ENCODE measurements at regions of chr19 and their contacts with region 1.

Region 1: DNA sequence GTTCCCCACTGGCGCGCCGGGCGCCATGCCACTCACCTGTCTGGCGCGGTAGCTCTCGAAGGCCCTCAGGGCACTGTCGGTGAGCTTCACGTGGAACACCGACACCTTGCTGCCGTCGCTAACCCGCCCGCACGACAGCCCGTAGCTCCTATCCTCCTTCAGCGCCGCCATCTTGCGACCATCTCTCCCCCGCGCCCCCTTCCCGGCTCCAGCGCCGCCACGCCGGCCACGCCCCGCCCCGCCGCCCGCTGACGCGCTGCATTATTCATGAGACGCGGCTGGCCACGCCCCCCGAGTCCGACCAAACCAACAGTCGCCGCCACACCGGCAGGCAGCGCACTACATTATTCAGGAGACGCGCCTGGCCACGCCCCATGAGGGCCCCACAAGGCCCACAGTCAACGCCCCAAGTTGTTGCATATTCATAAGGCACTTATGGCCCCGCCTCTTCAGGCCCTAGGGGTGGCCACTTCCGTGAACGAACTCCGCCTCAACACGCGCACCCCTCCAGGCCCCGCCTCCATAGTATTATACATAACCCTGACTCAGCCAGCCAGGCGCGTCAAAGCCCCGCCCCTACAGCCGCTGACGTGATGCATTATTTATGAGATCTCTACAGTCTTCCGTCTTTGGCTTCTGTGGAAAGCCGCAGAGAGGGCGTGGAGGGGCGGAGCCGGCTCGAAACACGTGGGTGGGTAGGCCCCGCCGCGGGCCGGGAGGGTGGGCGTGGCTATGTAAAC is at the start of gene ELL:
- DNase-seq: peak; percentile 99 to 100 (median 100)
- ATAC-seq: peak; percentile 92
- H3K4me3 ChIP-seq: peak within 1 kb of the TSS; percentile 89
- H3K4me3 Mint-ChIP-seq: peak within 1 kb of the TSS; percentile 87 to 99 (median 94)
- H3K27ac ChIP-seq: peak within 1 kb of the TSS; percentile 94
- H3K27ac Mint-ChIP-seq: peak within 1 kb of the TSS; percentile 89 to 98 (median 95)
- H3K4me1 ChIP-seq: peaks cover 5 to 10% of the 10 kb centered on the region in 2 donors
- H3K4me1 Mint-ChIP-seq: peaks cover 0 to 24% (median 17%) of the 10 kb centered on the region in 7 donors
- H3K27me3 ChIP-seq: no peaks in the 10 kb centered on the region
- H3K27me3 Mint-ChIP-seq: no peaks in the 10 kb centered on the region
- total RNA-seq, gene ELL: 18.9 to 70.4 (median 25.0) TPM

Region 2: DNA sequence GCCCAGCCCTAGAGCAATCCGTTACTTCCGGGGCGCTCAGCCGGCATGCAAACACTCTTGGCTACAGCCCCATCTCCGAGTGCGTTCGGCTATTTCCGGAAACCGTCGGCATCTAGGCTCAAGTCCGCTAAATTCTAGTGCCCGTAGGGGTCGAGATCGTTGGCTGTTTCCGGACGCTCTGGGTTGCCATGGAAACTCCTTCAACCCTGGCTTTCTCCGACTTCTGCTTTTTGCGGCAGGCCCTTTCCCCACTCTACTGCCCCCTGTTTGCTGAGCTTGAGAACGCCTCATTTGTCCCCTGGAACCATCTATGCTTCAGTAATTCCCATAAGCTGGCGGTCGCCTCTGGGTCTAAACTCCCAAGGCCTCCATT is 369.6 kb before region 1 on chr19:
- CTCF ChIA-PET with region 1: no interaction called
- POLR2A ChIA-PET with region 1: no interaction called
- intact Hi-C with region 1: loop called in 1 of 2 experiments (anchors 1 kb)
- DNase-seq: peak; percentile 92 to 99 (median 97)
- ATAC-seq: peak; percentile 76
- H3K4me3 ChIP-seq: peak overlapping the region; percentile 82
- H3K4me3 Mint-ChIP-seq: peak overlapping the region; percentile 81 to 95 (median 88)
- H3K27ac ChIP-seq: peak overlapping the region; percentile 88
- H3K27ac Mint-ChIP-seq: peak overlapping the region; percentile 89 to 97 (median 95)
- H3K4me1 ChIP-seq: peaks cover 16 to 20% of the 10 kb centered on the region in 2 donors
- H3K4me1 Mint-ChIP-seq: peaks cover 9 to 32% (median 24%) of the 10 kb centered on the region in 7 donors
- H3K27me3 ChIP-seq: no peaks in the 10 kb centered on the region
- H3K27me3 Mint-ChIP-seq: no peaks in the 10 kb centered on the region

Region 3: GRCh38 chr19:18557474-18558201 is 35.6 kb after region 1 on chr19 and contains the start of gene KXD1:
- CTCF ChIA-PET with region 1: interaction called, 8 read pairs
- POLR2A ChIA-PET with region 1: interaction called, 24 read pairs
- intact Hi-C with region 1: loop called (anchors 1 kb)
- DNase-seq: peak; percentile 89 to 99 (median 97)
- ATAC-seq: peak; percentile 100
- H3K4me3 ChIP-seq: peak within 1 kb of the TSS; percentile 84
- H3K4me3 Mint-ChIP-seq: peak within 1 kb of the TSS; percentile 83 to 93 (median 91)
- H3K27ac ChIP-seq: peak within 1 kb of the TSS; percentile 95
- H3K27ac Mint-ChIP-seq: peak within 1 kb of the TSS; percentile 87 to 97 (median 96)
- H3K4me1 ChIP-seq: peaks cover 13 to 15% of the 10 kb centered on the region in 2 donors
- H3K4me1 Mint-ChIP-seq: peaks cover 6 to 25% (median 23%) of the 10 kb centered on the region in 7 donors
- H3K27me3 ChIP-seq: no peaks in the 10 kb centered on the region
- H3K27me3 Mint-ChIP-seq: no peaks in the 10 kb centered on the region
- total RNA-seq, gene KXD1: 74.7 to 108 (median 99.9) TPM

Region 4: DNA sequence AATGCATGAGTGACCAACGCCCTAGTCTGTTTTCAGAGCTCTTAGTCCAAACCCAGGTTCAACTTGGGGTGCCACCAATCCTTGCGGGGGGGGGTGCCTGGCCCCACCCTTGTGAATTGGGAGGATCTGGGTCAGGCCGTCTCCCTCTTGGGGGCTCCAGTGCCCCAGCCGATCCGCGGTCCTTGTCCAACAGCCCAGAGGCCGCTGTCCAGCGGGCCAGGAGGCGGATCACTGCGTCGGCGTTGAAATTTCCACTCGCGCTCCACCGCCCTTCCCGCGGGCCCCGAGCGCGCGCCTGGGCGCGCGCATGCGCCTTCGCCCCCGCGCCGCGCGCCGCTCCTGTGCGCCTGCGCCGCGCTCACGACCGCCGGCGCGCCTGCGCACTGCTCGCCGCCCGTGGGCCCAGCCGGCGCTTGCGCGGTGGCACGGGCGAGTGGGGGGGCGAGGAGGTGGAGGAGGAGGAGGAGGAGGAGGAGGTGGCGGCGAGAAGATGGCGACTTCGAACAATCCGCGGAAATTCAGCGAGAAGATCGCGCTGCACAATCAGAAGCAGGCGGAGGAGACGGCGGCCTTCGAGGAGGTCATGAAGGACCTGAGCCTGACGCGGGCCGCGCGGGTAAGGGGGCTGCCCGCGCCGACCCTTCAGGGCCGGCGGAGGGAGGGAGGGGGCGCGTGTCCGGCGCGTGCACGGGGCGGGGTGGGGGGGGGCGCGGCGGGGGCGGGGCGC is 161.3 kb after region 1 on chr19 and contains the start of gene CRTC1:
- CTCF ChIA-PET with region 1: interaction called, 5 read pairs
- POLR2A ChIA-PET with region 1: no interaction called
- intact Hi-C with region 1: loop called (anchors 1 to 2 kb)
- DNase-seq: peak; percentile 91 to 98 (median 96)
- ATAC-seq: peak; percentile 94
- H3K4me3 ChIP-seq: peak within 1 kb of the TSS; percentile 92
- H3K4me3 Mint-ChIP-seq: peak within 1 kb of the TSS; percentile 80 to 93 (median 87)
- H3K27ac ChIP-seq: peak within 1 kb of the TSS; percentile 78
- H3K27ac Mint-ChIP-seq: peak within 1 kb of the TSS; percentile 31 to 94 (median 90)
- H3K4me1 ChIP-seq: peaks cover 12 to 16% of the 10 kb centered on the region in 2 donors
- H3K4me1 Mint-ChIP-seq: peaks cover 6 to 45% (median 27%) of the 10 kb centered on the region in 7 donors
- H3K27me3 ChIP-seq: no peaks in the 10 kb centered on the region
- H3K27me3 Mint-ChIP-seq: peaks cover 0 to 3% (median 0%) of the 10 kb centered on the region in 5 donors
- total RNA-seq, gene CRTC1: 8.4 to 23.4 (median 22.3) TPM

Region 5: GRCh38 chr19:18846862-18847548 is 324.9 kb after region 1 on chr19:
- CTCF ChIA-PET with region 1: interaction called, 19 read pairs
- POLR2A ChIA-PET with region 1: interaction called, 3 read pairs
- intact Hi-C with region 1: loop called in 1 of 2 experiments (anchors 1 kb)
- DNase-seq: peak; percentile 45 to 70 (median 57)
- ATAC-seq: peak; percentile 83
- H3K4me3 ChIP-seq: no peak overlapping the region
- H3K4me3 Mint-ChIP-seq: peak overlapping the region in 8 of 10 donors; percentile 27 to 71 (median 56)
- H3K27ac ChIP-seq: no peak overlapping the region
- H3K27ac Mint-ChIP-seq: peak overlapping the region in 8 of 9 donors; percentile 23 to 83 (median 69)
- H3K4me1 ChIP-seq: peaks cover 32 to 34% of the 10 kb centered on the region in 2 donors
- H3K4me1 Mint-ChIP-seq: peaks cover 49 to 65% (median 54%) of the 10 kb centered on the region in 7 donors
- H3K27me3 ChIP-seq: no peaks in the 10 kb centered on the region
- H3K27me3 Mint-ChIP-seq: no peaks in the 10 kb centered on the region

Region 6: DNA sequence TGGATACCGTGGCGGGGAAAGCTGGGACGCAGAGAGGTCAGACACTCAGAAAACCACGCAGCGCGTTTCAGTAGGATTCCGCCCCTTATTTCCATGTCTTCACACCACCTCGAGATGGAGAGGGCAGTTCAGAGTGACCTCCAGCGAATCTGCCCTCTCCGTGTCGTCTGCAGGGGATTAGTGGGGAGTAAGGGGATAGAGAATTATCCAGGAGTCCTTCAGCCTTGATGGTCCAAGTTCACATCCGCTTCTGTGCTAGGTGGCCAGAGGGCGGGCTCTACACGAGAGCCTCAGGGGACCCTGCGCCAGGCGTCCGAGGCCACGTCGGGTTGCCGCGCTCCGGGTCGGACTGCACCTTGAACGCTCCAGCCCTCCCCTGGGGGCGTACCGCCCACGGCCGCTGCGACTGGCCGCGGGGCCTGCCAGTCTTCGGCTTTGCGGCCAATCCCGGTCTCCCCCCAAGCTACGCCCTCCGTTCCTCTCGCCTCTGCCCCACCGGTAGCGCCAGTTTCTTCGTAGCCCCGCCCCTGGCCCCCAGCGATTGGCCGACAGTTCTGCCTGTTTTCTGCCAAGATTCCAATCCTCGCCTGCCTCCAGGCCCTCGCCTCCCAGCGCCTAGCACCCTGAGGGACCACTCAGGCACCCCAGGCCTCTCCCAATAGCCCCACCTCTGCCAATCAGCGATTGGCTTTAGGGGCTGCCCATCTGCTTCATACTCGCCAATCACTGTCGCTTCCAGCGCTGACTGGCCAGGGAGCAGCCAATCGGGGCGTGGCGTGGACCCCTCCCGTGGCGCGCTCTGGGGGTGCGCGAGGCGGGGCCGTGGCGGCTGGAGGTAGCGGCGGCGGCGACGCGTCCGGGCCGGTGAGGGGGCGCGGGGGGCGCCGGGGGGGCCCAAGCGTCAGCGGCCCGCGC is 541.4 kb after region 1 on chr19 and contains the start of gene SLC25A42:
- CTCF ChIA-PET with region 1: no interaction called
- POLR2A ChIA-PET with region 1: no interaction called
- intact Hi-C with region 1: loop called in 1 of 2 experiments (anchors 1 kb)
- DNase-seq: peak; percentile 93 to 100 (median 99)
- ATAC-seq: peak; percentile 95
- H3K4me3 ChIP-seq: peak within 1 kb of the TSS; percentile 82
- H3K4me3 Mint-ChIP-seq: peak within 1 kb of the TSS; percentile 83 to 99 (median 92)
- H3K27ac ChIP-seq: peak within 1 kb of the TSS; percentile 83
- H3K27ac Mint-ChIP-seq: peak within 1 kb of the TSS; percentile 75 to 98 (median 83)
- H3K4me1 ChIP-seq: peaks cover 11 to 15% of the 10 kb centered on the region in 2 donors
- H3K4me1 Mint-ChIP-seq: peaks cover 5 to 41% (median 35%) of the 10 kb centered on the region in 7 donors
- H3K27me3 ChIP-seq: no peaks in the 10 kb centered on the region
- H3K27me3 Mint-ChIP-seq: no peaks in the 10 kb centered on the region
- total RNA-seq, gene SLC25A42: 19.0 to 36.1 (median 21.6) TPM

Region 7: DNA sequence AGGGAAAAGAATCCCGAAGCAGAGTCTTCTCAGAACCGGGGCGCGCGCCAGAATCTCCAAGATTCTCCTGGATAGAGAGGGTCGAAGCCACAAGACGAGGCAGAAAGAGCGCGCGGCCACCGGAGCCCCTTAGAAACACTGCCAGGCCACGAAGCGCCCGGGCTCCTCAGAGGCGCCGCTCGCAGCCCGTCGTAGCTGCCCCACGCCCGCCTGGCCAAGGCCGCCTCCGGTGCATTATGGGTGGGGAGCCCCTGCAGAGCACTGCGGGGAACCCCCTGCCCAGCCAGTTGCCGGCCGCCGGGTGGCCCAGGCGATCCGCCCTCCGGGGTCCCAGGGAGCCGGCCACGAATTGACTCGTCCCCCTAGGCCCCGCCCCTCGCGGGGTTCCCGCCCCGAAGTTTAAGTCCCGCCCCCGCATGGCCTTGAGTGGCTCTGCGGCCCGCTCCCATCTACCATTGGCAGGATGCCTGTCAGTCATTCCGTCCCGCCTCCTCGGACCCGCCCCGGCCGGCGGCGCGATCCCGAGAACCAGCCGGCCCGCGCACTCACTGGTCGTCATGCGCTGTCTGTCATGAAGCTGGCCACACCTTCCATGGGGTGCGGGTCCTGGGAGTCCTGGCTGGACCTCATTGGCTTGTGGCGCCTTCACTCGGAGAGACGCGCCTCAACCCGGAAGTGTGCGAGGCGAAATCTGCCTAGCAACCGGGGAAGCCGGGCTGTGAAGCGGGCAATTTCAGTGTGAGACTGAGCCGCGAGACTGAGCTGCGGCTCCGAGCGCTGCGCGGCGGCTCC is 863.2 kb after region 1 on chr19:
- CTCF ChIA-PET with region 1: no interaction called
- POLR2A ChIA-PET with region 1: no interaction called
- intact Hi-C with region 1: no loop called
- DNase-seq: peak; percentile 95 to 100 (median 99)
- ATAC-seq: peak; percentile 93
- H3K4me3 ChIP-seq: peak overlapping the region; percentile 81
- H3K4me3 Mint-ChIP-seq: peak overlapping the region; percentile 89 to 99 (median 94)
- H3K27ac ChIP-seq: peak overlapping the region; percentile 88
- H3K27ac Mint-ChIP-seq: peak overlapping the region; percentile 25 to 96 (median 93)
- H3K4me1 ChIP-seq: peaks cover 29 to 42% of the 10 kb centered on the region in 2 donors
- H3K4me1 Mint-ChIP-seq: peaks cover 36 to 46% (median 42%) of the 10 kb centered on the region in 7 donors
- H3K27me3 ChIP-seq: no peaks in the 10 kb centered on the region
- H3K27me3 Mint-ChIP-seq: no peaks in the 10 kb centered on the region